WTC11 (cell line): ENCODE measurements at regions of chr11 and their contacts with region 1.

Region 1: DNA sequence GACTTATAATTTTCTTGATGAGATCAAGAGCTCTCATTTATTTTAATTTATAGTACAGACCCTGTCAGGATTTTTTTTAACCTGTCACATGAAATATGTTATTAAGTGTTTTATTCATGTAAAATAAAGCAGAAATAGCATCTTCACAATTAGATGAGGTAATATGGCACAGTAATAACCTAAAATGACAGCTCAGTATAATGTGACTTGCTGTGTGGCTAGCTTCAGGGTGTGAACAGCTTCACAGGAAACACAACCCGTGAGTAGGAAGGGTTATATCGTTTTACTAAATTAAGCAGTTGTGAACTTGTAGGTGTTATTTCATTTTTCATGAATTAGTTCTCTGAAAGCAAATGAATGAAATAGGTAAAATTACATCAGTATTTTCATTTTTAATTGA is 366.9 kb upstream of the CHORDC1 start:
- DNase-seq: no peak
- ATAC-seq: no peak
- H3K4me3 Mint-ChIP-seq: no peak overlapping the region
- H3K27ac Mint-ChIP-seq: no peak overlapping the region
- H3K4me1 Mint-ChIP-seq: peaks cover 8% of the 10 kb centered on the region
- H3K27me3 Mint-ChIP-seq: no peaks in the 10 kb centered on the region
- CTCF ChIP-seq: no peak

Region 2: DNA sequence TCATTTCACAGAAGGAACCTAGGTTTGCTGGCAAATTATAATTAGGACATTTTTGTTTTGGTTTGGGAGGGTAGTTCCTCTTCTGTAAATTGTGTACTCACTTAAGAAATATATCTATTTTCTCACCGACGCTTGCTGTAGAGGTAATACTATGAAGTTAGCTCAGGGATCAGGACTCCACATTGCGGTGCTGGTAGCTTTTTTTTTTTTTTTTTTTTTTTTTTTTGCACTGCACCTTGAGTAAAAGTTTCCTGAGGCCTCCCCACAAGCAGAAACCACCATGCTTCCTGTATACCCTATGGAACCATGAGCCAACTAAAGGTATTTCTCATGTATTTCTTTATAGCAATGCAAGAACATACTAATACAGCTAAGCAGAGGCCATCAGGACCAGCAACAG is 489.3 kb before region 1 on chr11:
- CTCF ChIA-PET with region 1: no interaction called
- POLR2A ChIA-PET with region 1: no interaction called
- DNase-seq: no peak
- ATAC-seq: no peak
- H3K4me3 Mint-ChIP-seq: no peak overlapping the region
- H3K27ac Mint-ChIP-seq: no peak overlapping the region
- H3K4me1 Mint-ChIP-seq: peaks cover 2% of the 10 kb centered on the region; the same call in 1 of the 2 replicates
- H3K27me3 Mint-ChIP-seq: no peaks in the 10 kb centered on the region
- CTCF ChIP-seq: no peak

Region 3: DNA sequence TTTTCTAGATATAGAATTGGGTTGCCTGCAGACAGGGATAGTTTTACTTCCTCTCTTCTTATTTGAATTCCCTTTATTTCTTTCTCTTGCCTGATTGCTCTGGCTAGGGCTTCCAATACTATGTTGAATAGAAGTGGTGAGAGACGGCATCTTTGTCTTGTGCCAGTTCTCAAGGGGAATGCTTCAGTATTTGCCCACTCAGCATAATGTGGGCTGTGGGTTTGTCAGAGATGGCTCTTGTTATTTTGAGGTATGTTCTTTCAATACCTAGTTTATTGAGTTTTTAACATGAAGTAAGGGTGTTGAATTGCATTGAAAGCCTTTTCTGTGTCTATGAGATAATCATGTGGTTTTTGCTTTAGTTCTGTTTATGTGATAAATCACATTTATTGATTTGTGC is 93.0 kb before region 1 on chr11:
- CTCF ChIA-PET with region 1: no interaction called
- POLR2A ChIA-PET with region 1: interaction called, 10 read pairs
- DNase-seq: no peak
- ATAC-seq: no peak
- H3K4me3 Mint-ChIP-seq: no peak overlapping the region
- H3K27ac Mint-ChIP-seq: no peak overlapping the region
- H3K4me1 Mint-ChIP-seq: no peaks in the 10 kb centered on the region
- H3K27me3 Mint-ChIP-seq: no peaks in the 10 kb centered on the region
- CTCF ChIP-seq: no peak